ENCODE measurements at regions of chr14 and their contacts with region 1.

Region 1: DNA sequence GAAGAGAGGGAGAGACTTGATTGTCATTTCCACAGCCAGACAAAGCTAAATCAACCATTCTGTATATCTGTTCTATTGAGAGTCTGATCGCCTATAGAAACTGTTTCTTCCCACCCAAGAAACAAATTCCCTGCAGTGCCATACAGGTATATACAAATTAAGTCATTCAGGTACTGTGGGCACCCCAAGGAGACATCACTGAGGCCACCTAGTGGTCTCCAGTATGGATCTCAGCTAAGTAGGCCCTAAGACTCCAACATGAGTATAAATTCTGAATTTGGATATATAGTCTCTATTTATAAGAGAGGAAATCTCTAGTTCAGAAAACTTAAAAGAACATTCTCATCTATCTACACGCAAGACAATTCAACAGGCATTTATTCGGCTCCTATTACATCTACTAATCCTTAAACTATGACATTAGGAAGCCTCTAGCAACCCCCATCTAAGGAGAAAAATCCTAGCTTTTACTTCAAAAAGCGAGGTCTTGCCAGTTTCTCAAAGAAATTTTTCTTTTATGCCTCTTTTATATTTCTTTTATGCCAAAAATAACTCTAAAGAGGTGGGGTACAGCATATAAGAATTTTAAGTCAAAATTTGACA is 62.6 kb downstream of the DCAF5 start:
- DNase-seq: peak in 7 of 9 experiments; percentile 10 to 60 (median 37)
- ATAC-seq: peak; percentile 71
- H3K4me3 ChIP-seq: no peak overlapping the region
- H3K4me3 Mint-ChIP-seq: no peak overlapping the region
- H3K27ac ChIP-seq: no peak overlapping the region
- H3K27ac Mint-ChIP-seq: peak overlapping the region; percentile 22
- H3K4me1 ChIP-seq: no peaks in the 10 kb centered on the region
- H3K4me1 Mint-ChIP-seq: peaks cover 16% of the 10 kb centered on the region
- H3K27me3 ChIP-seq: no peaks in the 10 kb centered on the region
- H3K27me3 Mint-ChIP-seq: no peaks in the 10 kb centered on the region
- CTCF ChIP-seq: peak; percentile 56

Region 2: GRCh38 chr14:68899033-68899603 is 191.2 kb before region 1 on chr14:
- CTCF ChIA-PET with region 1: interaction called, 4 read pairs
- POLR2A ChIA-PET with region 1: no interaction called
- intact Hi-C with region 1: loop called in 1 of 2 experiments (anchors 2 kb)
- DNase-seq: peak in 2 of 9 experiments; percentile 36 to 50
- ATAC-seq: peak; percentile 23
- H3K4me3 ChIP-seq: no peak overlapping the region
- H3K4me3 Mint-ChIP-seq: no peak overlapping the region
- H3K27ac ChIP-seq: peak overlapping the region; percentile 28 to 69
- H3K27ac Mint-ChIP-seq: peak overlapping the region; percentile 76
- H3K4me1 ChIP-seq: peaks cover 15% of the 10 kb centered on the region
- H3K4me1 Mint-ChIP-seq: peaks cover 27% of the 10 kb centered on the region
- H3K27me3 ChIP-seq: no peaks in the 10 kb centered on the region
- H3K27me3 Mint-ChIP-seq: no peaks in the 10 kb centered on the region
- CTCF ChIP-seq: no peak

Region 3: DNA sequence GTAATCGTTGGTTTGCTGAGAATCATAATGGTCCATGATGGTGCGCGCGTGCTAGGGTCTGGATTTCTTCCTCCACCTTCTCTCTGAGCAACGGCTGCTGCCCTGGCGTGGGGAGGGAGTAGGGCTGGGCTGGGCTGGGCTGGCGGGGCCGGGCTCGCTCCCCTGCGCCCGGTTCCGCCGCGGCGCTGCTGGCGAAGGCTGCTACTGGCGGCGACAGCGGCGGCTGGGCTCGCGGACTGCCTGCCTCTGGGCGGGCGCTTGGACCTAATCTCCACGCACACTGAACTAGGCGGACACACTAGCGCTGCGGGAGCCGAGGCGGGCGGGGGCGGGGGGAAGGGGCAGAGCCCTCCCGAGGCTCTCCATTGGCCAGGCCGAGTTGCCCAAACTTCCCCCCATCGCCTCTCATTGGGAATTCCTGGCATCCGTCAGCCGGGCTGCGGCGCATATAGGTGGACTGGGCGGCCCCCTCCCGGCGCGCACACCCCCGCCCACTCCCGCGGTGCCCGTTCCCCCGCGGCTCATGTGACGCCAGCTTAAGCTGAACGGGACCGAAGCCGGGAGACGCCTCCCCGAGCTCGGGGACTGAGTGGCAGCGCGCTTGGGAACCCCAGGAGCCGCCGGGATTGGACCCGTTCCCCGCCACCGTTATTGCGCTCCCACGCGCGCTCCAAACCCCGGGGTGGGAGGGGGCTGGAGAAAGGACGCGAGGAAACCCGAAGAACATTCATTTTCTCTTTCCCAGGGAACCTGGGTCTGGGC is 111.1 kb before region 1 on chr14 and contains the start of gene ACTN1:
- CTCF ChIA-PET with region 1: interaction called, 3 read pairs
- POLR2A ChIA-PET with region 1: no interaction called
- intact Hi-C with region 1: loop called in 1 of 2 experiments (anchors 10 kb)
- DNase-seq: peak; percentile 22 to 87 (median 72)
- ATAC-seq: peak; percentile 52
- H3K4me3 ChIP-seq: peak within 1 kb of the TSS; percentile 79 to 86
- H3K4me3 Mint-ChIP-seq: peak within 1 kb of the TSS; percentile 94
- H3K27ac ChIP-seq: peak within 1 kb of the TSS; percentile 48 to 70
- H3K27ac Mint-ChIP-seq: peak within 1 kb of the TSS; percentile 93
- H3K4me1 ChIP-seq: peaks cover 45% of the 10 kb centered on the region
- H3K4me1 Mint-ChIP-seq: peaks cover 58% of the 10 kb centered on the region
- H3K27me3 ChIP-seq: no peaks in the 10 kb centered on the region
- H3K27me3 Mint-ChIP-seq: no peaks in the 10 kb centered on the region
- CTCF ChIP-seq: no peak
- total RNA-seq, gene ACTN1: 153 to 161 TPM

Region 4: GRCh38 chr14:69055999-69056788 is 34.1 kb before region 1 on chr14:
- CTCF ChIA-PET with region 1: no interaction called
- POLR2A ChIA-PET with region 1: no interaction called
- intact Hi-C with region 1: no loop called
- DNase-seq: peak in 4 of 9 experiments; percentile 16 to 48 (median 28)
- ATAC-seq: peak; percentile 64
- H3K4me3 ChIP-seq: no peak overlapping the region
- H3K4me3 Mint-ChIP-seq: no peak overlapping the region
- H3K27ac ChIP-seq: no peak overlapping the region
- H3K27ac Mint-ChIP-seq: peak overlapping the region; percentile 1
- H3K4me1 ChIP-seq: no peaks in the 10 kb centered on the region
- H3K4me1 Mint-ChIP-seq: peaks cover 13% of the 10 kb centered on the region
- H3K27me3 ChIP-seq: no peaks in the 10 kb centered on the region
- H3K27me3 Mint-ChIP-seq: no peaks in the 10 kb centered on the region
- CTCF ChIP-seq: no peak

Region 5: GRCh38 chr14:69149461-69150244 is 59.4 kb after region 1 on chr14:
- CTCF ChIA-PET with region 1: no interaction called
- POLR2A ChIA-PET with region 1: no interaction called
- intact Hi-C with region 1: no loop called
- DNase-seq: no peak
- ATAC-seq: no peak
- H3K4me3 ChIP-seq: no peak overlapping the region
- H3K4me3 Mint-ChIP-seq: peak overlapping the region; percentile 89
- H3K27ac ChIP-seq: peak overlapping the region in 1 of 2 experiments; percentile 17
- H3K27ac Mint-ChIP-seq: peak overlapping the region; percentile 37
- H3K4me1 ChIP-seq: peaks cover 42% of the 10 kb centered on the region
- H3K4me1 Mint-ChIP-seq: peaks cover 63% of the 10 kb centered on the region
- H3K27me3 ChIP-seq: no peaks in the 10 kb centered on the region
- H3K27me3 Mint-ChIP-seq: no peaks in the 10 kb centered on the region
- CTCF ChIP-seq: no peak

Region 6: DNA sequence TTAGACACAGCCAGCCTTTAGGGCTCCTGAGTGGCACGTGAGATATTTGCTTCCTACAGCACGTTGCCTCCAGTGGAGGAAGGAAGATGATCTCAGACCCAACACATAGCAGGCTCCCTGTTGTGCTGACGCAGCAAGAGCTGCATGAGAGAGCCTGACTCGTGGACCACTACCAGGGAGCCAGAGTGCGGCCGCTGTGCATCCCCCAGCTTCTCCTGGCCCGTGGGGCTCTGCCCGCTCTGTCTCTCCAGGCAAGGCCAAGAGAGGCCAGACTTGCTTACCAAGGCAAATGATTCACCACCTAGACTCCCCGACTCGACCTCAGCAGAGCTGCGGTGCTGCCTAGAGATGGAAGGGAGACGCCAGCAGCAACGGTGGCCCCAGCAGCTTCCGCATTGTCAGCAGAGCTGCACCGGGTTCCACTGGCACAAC is 1681.5 kb after region 1 on chr14:
- CTCF ChIA-PET with region 1: no interaction called
- POLR2A ChIA-PET with region 1: no interaction called
- intact Hi-C with region 1: no loop called
- DNase-seq: no peak
- ATAC-seq: no peak
- H3K4me3 ChIP-seq: no peak overlapping the region
- H3K4me3 Mint-ChIP-seq: no peak overlapping the region
- H3K27ac ChIP-seq: no peak overlapping the region
- H3K27ac Mint-ChIP-seq: no peak overlapping the region
- H3K4me1 ChIP-seq: no peaks in the 10 kb centered on the region
- H3K4me1 Mint-ChIP-seq: no peaks in the 10 kb centered on the region
- H3K27me3 ChIP-seq: no peaks in the 10 kb centered on the region
- H3K27me3 Mint-ChIP-seq: no peaks in the 10 kb centered on the region
- CTCF ChIP-seq: no peak